ENCODE measurements at regions of chrX and their contacts with region 1.

Region 1: DNA sequence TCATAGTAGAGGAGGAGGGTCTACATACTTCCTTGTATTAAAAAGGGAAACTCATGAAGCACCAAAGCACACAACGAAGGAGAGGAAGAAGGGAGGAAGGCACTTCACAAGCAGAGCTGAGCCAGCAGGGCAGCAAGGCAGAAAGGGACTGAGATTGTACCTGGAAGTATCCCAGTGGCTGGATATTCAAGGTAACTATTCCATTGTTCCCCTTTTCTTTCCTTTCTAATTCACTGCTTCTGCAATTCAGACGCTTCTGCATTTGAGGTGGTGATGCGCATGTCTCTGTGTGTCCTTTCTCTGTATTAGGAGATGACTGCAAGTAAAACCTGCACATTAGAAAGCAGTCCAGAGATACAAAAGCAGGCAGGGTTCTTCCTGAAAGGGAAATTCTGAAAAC is 54.9 kb downstream of the UBQLN2 start:
- DNase-seq: no peak
- ATAC-seq: no peak
- H3K4me3 ChIP-seq: no peak overlapping the region
- H3K4me3 Mint-ChIP-seq: no peak overlapping the region
- H3K27ac ChIP-seq: no peak overlapping the region
- H3K27ac Mint-ChIP-seq: no peak overlapping the region
- H3K4me1 ChIP-seq: no peaks in the 10 kb centered on the region
- H3K4me1 Mint-ChIP-seq: no peaks in the 10 kb centered on the region
- H3K27me3 ChIP-seq: no peaks in the 10 kb centered on the region
- H3K27me3 Mint-ChIP-seq: no peaks in the 10 kb centered on the region
- CTCF ChIP-seq: no peak

Region 2: GRCh38 chrX:56563231-56564161 is 54.8 kb before region 1 on chrX and contains the start of gene UBQLN2:
- CTCF ChIA-PET with region 1: no interaction called
- POLR2A ChIA-PET with region 1: no interaction called
- intact Hi-C with region 1: loop called in 1 of 2 experiments (anchors 10 kb)
- DNase-seq: peak; percentile 61 to 89 (median 74)
- ATAC-seq: peak; percentile 76
- H3K4me3 ChIP-seq: peak within 1 kb of the TSS; percentile 80
- H3K4me3 Mint-ChIP-seq: peak within 1 kb of the TSS; percentile 90
- H3K27ac ChIP-seq: peak within 1 kb of the TSS; percentile 80 to 89
- H3K27ac Mint-ChIP-seq: peak within 1 kb of the TSS; percentile 96
- H3K4me1 ChIP-seq: no peaks in the 10 kb centered on the region
- H3K4me1 Mint-ChIP-seq: peaks cover 39% of the 10 kb centered on the region
- H3K27me3 ChIP-seq: no peaks in the 10 kb centered on the region
- H3K27me3 Mint-ChIP-seq: no peaks in the 10 kb centered on the region
- CTCF ChIP-seq: no peak
- total RNA-seq, gene UBQLN2: 48.7 to 49.1 TPM

Measured in CD4-positive, alpha-beta T cell (primary cell).